ENCODE measurements at regions of chr15 and their contacts with region 1.

Region 1: DNA sequence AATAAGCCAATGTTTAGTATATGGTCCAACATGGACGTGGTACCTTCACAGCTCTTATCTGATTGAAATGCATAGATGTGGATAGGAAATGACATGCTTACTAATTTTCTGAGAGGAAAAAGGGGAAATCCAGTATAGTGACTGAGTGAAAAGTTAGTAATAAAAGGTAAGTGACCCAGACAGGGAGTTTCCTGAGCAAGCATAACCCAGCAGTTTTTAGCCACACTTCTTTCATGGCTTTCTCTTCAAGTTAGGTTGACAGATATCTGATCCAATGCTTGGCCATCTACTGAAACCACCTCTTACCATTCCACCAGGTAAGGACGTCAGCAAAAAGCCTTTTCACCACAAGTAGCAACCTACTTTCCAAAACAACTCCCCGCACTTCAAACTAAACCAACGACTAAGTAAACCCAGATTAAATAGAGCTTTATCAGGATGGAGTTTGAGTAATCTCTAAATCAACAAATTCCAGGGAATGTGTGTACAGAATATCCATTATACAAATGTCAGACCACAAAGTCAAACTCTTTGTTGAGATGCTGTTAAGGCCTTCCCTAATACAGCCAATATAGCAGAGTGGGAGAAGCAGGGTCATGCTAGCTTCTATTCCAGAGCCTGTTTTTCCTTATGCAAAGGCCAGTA is 329.7 kb downstream of the RORA start:
- DNase-seq: peak; percentile 43
- H3K4me3 Mint-ChIP-seq: peak overlapping the region; percentile 40
- H3K27ac Mint-ChIP-seq: peak overlapping the region; percentile 88
- H3K4me1 Mint-ChIP-seq: peaks cover 70% of the 10 kb centered on the region
- H3K27me3 Mint-ChIP-seq: no peaks in the 10 kb centered on the region

Region 2: DNA sequence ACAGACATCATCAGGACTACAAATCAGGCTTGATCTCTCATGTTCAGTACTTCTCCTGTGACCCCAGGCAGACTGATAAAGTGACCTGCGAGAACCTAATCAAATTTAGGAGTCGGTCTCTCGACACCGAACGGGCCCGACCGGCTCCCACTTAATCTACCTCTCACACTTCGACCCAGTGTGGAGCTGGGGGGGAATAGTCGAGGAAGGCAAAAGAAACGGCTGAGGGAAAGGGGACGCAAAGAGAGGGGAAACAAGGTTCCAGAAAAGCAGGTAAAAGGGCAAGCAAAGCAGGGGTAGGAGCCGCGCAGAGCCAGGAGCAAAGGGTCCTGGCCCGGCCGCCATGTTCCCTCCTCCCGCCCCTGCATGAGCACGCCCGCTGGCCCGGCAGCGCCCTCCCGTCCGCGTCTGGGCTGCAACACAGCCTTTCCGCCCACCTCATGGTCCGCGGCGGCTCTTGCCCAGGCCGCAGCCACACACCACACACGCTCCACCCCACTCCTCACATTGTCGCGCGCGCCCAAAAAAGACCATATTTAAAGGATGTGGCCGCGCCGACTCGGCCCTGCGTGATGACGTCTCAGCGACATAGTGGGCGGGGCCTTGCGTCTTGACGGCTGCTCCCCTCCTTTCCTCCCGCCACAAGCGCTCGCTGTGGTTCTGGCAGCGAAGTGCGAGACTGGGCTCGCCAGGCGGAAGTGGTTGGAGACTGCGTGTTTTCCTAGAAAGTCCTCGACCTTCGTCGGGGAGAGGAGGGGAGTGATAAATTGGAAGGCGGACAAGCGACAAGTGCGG is 420.7 kb before region 1 on chr15 and contains the start of gene ICE2:
- intact Hi-C with region 1: loop called (anchors 1 kb)
- DNase-seq: peak; percentile 95
- H3K4me3 Mint-ChIP-seq: peak within 1 kb of the TSS; percentile 97
- H3K27ac Mint-ChIP-seq: peak within 1 kb of the TSS; percentile 97
- H3K4me1 Mint-ChIP-seq: peaks cover 52% of the 10 kb centered on the region
- H3K27me3 Mint-ChIP-seq: no peaks in the 10 kb centered on the region
- total RNA-seq, gene ICE2: 51.9 and 56.1 TPM in 2 replicates

Region 3: DNA sequence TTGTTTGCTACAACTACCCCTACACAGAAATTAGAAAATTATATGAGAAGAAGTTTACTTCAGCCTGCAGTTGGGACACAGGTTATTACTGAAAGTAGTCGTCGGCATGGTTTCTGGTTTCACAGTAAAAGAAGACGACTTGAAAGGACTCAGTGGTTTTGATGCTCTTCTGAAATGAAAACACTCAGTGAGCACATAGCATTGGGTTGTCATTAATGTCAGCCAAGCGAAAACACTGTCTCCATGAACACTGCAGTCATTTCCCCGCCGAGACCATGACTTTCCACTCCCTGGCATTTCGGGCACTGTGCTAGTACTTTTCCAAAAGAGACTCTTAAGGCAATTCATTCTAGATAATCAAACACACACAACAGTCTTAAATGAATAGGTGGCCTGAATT is 351.3 kb before region 1 on chr15:
- intact Hi-C with region 1: loop called (anchors 1 kb)
- DNase-seq: peak; percentile 54
- H3K4me3 Mint-ChIP-seq: peak overlapping the region; percentile 51
- H3K27ac Mint-ChIP-seq: peak overlapping the region; percentile 93
- H3K4me1 Mint-ChIP-seq: peaks cover 96% of the 10 kb centered on the region
- H3K27me3 Mint-ChIP-seq: no peaks in the 10 kb centered on the region

Region 4: GRCh38 chr15:60568301-60568742 is 331.1 kb before region 1 on chr15:
- intact Hi-C with region 1: no loop called
- DNase-seq: no peak
- H3K4me3 Mint-ChIP-seq: peak overlapping the region; percentile 69
- H3K27ac Mint-ChIP-seq: peak overlapping the region; percentile 82
- H3K4me1 Mint-ChIP-seq: peaks cover 92% of the 10 kb centered on the region
- H3K27me3 Mint-ChIP-seq: no peaks in the 10 kb centered on the region

Region 5: DNA sequence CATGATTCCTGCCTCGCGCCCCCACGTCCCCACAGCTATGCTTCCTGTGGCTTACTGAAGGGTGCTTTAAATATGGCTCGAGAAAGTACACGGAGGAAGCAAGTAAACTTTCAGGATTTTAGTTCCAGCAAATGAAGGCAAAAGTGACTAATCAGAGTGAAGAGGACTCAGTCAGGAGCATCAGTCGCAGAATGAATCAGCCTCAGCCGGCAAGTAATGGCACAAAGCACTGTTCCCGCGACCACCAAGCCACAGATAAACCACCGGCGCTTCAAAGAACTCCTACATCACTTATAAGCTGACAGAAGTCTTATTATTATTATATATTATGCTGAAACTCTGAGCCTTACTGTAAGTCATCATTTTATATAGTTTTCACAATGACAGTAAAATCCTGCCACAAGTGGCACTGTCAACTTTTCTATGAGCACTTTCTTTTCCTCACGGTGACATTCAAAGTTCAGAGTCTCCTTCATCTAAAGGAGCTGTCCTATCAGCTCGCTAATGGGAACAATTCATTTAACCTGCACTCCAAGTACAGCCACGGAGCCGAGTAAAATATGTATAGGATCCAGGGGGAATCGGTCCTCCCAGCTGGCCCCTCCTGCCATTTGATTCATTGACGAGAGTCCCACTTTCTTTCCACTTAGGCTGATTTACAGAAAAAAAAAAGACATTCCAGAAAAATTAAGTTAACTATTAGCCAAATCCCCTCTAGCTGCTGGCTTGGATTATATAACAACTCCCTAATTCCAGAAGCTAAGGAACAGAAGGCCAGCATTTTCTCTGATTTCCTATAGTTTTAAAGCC is 203.5 kb before region 1 on chr15:
- intact Hi-C with region 1: loop called (anchors 1 kb)
- DNase-seq: peak; percentile 48
- H3K4me3 Mint-ChIP-seq: peak overlapping the region; percentile 32
- H3K27ac Mint-ChIP-seq: peak overlapping the region; percentile 75
- H3K4me1 Mint-ChIP-seq: peaks cover 66% of the 10 kb centered on the region
- H3K27me3 Mint-ChIP-seq: no peaks in the 10 kb centered on the region

Region 6: DNA sequence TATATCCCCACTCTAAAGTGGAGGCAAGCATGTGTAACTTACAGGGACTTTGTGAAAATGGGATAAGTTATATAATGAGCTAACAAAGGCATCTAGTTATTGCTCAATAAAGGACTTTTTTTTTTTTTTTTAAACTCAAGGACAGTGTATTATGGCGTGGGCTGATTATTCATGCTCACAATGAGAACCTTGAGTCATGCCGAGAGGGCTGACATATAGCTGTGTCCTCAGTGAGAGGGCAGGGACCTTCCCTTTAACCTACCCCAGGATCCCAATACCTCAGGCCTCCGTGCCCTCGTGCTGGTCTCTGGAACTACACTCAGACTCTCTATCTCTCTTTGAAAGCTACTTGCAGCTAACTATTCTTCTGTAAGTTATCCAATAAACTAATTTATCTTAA is 100.6 kb before region 1 on chr15:
- intact Hi-C with region 1: loop called (anchors 1 kb)
- DNase-seq: no peak
- H3K4me3 Mint-ChIP-seq: no peak overlapping the region
- H3K27ac Mint-ChIP-seq: peak overlapping the region; percentile 82
- H3K4me1 Mint-ChIP-seq: peaks cover 76% of the 10 kb centered on the region
- H3K27me3 Mint-ChIP-seq: no peaks in the 10 kb centered on the region

Region 7: GRCh38 chr15:60854858-60855564 is 44.4 kb before region 1 on chr15:
- intact Hi-C with region 1: loop called (anchors 2 kb)
- DNase-seq: no peak
- H3K4me3 Mint-ChIP-seq: no peak overlapping the region
- H3K27ac Mint-ChIP-seq: no peak overlapping the region
- H3K4me1 Mint-ChIP-seq: peaks cover 58% of the 10 kb centered on the region
- H3K27me3 Mint-ChIP-seq: peaks cover 4% of the 10 kb centered on the region

Measured in activated T-helper 1 cell treated with anti-CD3 and anti-CD28 coated beads, Interleukin-12 subunit alpha, Interleukin-12 subunit beta, Interleukin-2, Interleukin-4 antibody, amounts not matched to agents 30 ng/mL and 10 ng/mL and 1 ng/mL, durations not matched to agents 14 hours and 24 hours and 36 hours (primary cell).